ENCODE measurements at regions of chr14 and their contacts with region 1.

Region 1: DNA sequence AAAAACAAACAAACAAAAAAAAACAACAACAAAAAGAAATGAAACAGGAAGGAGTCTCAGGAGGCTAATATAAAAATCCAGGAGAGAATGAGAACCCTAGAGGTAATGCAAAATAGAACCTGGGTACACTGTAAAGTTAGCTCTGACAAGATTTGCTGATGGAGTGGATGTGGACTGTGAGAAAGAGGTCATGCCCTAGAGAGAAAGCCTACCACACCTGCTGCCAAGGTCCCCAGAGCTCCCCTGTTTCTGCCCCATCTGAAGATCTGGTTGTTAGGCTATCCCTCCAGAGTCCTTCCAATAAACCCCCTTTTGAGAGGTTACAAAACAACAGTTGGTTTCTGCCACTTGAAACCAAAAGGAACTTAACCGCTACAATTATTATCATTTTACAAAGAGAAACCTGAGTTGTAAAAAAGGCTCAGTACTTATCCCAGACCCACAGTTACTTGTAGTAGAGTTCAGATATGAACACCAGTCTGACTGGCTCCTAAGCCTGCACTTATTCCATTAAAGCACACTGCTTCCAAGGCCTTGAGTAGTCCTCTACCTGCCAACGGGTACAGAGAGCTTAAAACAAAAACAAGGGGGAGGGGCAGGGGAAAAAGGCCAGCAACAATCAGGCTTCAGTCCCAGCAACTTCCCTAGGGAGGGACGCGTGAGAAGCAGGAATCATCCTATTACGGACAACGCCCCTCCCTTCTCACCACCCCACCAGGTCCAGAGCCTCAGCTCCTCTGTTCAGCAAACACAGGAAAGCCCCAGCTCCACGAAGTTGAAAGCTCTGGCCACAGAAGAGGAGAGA is 27.7 kb downstream of the PPP1R13B start:
- DNase-seq: peak; percentile 55
- H3K27ac ChIP-seq: 0 out of 2 replicates have a peak overlapping the region, but pooled peaks have one; percentile 43
- CTCF ChIP-seq: no peak

Region 2: GRCh38 chr14:103427485-103428443 is 391.9 kb before region 1 on chr14:
- CTCF ChIA-PET with region 1: no interaction called
- POLR2A ChIA-PET with region 1: no interaction called
- DNase-seq: no peak
- H3K27ac ChIP-seq: no peak overlapping the region
- CTCF ChIP-seq: no peak

Region 3: DNA sequence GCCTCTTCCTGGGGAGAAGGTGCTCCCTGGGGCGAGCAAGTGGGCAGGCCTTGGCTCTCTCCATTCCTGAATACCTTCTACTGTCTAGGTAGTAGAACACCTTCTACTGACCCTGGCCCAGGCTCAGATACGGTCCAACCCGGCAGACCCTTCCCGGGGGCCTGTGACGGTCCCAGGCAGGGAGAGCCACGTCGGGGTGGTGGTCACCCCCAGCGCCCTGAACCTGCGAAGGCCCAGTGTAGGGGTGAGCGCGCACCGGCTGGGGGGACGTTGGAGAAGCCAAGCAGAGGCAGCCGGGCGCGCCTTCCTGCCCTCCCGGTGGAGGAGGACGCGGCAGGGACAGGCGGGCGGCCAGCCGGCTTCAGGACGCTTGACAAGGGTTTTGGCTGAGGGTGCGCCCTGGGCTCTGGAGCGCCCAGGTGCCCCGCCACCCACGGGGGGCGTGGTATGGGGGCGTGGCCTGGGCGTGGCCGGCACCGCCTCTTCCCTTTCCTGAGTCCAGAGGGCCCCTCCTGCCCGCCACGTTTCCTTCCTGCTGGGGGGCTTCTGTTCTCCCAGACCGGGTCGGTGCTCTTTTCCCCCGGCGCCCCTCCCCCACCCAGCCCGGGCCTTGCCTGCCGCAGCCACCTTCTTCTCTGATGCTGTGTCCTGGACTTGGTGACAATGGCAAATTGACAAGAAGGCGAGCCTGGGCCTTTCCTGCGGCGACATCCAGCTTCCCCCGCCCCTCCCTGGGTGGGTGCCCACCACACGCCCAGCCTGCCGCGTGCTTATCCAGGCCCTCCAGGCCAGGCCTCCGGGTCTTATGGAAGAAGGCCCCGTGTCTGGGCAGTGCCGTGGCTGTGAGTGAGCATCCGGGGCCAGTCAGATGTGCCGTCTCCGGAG is 52.1 kb after region 1 on chr14:
- CTCF ChIA-PET with region 1: no interaction called
- POLR2A ChIA-PET with region 1: interaction called, 10 read pairs
- DNase-seq: peak; percentile 80
- H3K27ac ChIP-seq: peak overlapping the region; percentile 95
- CTCF ChIP-seq: no peak

Measured in RWPE1 (cell line).